H1 (cell line): ENCODE measurements at regions of chr7 and their contacts with region 1.

Region 1: GRCh38 chr7:122123746-122124145 is 20.3 kb downstream of the AASS start:
- DNase-seq: no peak
- H3K4me3 ChIP-seq: no peak overlapping the region
- H3K27ac ChIP-seq: peak overlapping the region; percentile 8; the same call in 1 of the 2 replicates
- H3K4me1 ChIP-seq: no peaks in the 10 kb centered on the region
- H3K27me3 ChIP-seq: no peaks in the 10 kb centered on the region
- CTCF ChIP-seq: no peak
- EP300 ChIP-seq: no peak
- POLR2A ChIP-seq: no peak
- RAD21 ChIP-seq: no peak

Region 2: DNA sequence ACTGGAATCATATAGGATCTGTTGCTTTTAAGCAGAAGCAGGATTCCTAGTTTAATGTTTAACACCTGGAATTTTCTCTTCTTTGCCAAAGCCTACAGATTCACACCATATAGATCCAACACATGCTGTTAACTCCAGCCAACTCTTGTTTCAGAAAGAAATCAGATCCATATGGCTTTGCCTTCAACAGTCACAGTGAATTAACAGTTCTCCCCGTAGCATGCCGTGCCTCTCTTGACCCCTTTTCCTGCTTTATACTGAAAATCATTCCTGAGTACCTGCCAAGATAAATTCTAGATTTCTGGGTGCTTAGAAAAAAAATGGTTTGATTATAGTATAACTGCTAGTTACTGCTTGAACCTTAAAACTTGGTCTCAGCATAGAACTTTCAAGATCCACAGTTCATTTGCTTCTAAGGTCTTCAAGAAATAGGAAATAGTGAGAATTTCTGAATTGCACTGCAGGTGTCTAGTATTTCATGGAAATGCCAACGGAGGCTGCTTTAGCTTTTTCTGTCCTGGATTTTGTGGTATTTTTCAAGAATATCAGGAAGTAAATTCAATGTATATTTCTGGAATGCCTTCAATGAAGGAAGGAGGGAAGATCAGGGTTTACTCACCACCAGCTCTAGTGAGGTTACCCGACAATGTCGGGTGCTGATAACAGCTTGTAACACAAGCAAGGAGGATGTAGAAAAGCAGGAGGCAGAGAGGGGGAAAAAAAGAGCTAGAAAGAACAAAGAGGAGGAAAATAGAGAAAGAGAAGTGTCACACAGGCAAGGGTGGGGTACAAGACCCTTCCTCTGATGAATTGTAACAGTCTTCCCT is 13.7 kb after region 1 on chr7:
- CTCF ChIA-PET with region 1: interaction called, 4 read pairs
- POLR2A ChIA-PET with region 1: interaction called, 66 read pairs
- DNase-seq: no peak
- H3K4me3 ChIP-seq: peak overlapping the region in 2 of 4 experiments; percentile 86 to 98; a peak in 4 of 8 replicates
- H3K27ac ChIP-seq: no peak overlapping the region
- H3K4me1 ChIP-seq: peaks cover 0 to 17% (median 6%) of the 10 kb centered on the region in 4 experiments; a peak in 5 of 7 replicates
- H3K27me3 ChIP-seq: no peaks in the 10 kb centered on the region
- CTCF ChIP-seq: no peak
- EP300 ChIP-seq: no peak
- POLR2A ChIP-seq: no peak; a peak in 1 of 3 replicates
- RAD21 ChIP-seq: no peak

Region 3: DNA sequence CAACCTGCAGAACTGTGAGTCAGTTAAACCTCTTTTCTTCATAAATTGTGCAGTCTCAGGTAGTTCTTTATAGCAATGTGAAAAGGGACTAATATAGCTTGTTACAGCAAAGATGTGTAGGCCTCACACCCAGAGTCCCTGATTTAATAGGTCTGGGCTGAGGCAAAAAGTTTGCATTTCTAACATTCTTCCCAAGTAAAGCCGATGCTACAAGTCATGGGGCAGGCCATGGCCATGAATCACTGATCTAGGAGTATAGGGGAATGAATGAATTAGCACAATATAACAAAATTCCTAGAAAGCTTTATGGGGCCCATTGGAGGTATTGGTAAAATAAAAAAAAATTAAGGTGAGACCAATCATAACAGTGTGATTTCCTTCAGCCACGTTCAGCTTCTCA is 31.8 kb after region 1 on chr7:
- CTCF ChIA-PET with region 1: no interaction called
- POLR2A ChIA-PET with region 1: no interaction called
- DNase-seq: no peak
- H3K4me3 ChIP-seq: no peak overlapping the region
- H3K27ac ChIP-seq: no peak overlapping the region
- H3K4me1 ChIP-seq: peaks cover 0 to 16% (median 5%) of the 10 kb centered on the region in 4 experiments; a peak in 4 of 7 replicates
- H3K27me3 ChIP-seq: no peaks in the 10 kb centered on the region
- CTCF ChIP-seq: no peak
- EP300 ChIP-seq: no peak
- POLR2A ChIP-seq: no peak
- RAD21 ChIP-seq: no peak